HEK293T (cell line): ENCODE measurements at regions of chr17 and their contacts with region 1.

Region 1: GRCh38 chr17:81711814-81712467 is at the start of gene SLC25A10:
- DNase-seq: peak; percentile 90

Region 2: DNA sequence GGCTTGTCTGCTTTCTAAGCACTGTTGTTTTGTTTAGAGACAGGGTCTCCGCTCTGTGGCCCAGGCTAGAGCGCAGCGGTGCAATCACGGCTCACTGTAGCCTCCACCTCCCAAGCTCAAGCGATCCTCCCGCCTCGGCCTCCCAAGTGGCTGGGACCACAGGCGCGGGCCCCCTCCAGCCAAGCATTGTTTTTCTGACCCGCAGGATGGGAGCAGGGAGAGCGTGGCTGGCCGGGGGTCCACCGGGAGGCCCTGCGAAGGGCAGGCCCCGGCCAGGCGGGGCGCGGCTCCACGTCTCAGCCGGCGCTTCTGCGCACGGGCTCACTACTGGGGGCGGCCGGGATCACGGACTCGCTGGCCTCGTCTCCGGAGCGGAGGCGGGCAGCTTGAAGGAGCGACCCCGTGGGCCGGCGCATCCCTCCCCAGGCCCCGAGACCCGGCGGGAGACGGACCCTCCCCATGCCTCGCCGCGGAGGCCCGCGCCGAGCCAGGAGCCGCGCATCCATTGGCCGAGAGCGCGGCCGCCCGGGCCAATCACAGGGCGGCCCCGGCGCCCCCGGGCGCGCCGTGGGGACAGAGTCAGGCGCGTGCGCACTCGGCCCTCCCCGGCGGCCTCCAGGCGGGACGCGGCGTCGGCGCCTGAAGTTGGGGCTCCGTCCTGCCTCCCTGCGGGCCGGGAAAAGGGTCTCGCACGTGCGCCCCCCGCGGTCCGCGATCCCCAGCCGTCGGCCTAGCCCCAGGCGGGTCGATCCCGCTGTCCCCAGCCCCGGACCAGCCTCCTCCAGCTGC is 224.3 kb before region 1 on chr17:
- CTCF ChIA-PET with region 1: no interaction called
- POLR2A ChIA-PET with region 1: no interaction called
- DNase-seq: peak; percentile 95

Region 3: GRCh38 chr17:81723651-81724209 is 11.8 kb after region 1 on chr17:
- CTCF ChIA-PET with region 1: interaction called, 3 read pairs
- POLR2A ChIA-PET with region 1: interaction called, 16 read pairs
- DNase-seq: no peak

Region 4: GRCh38 chr17:81941790-81942553 is 230.0 kb after region 1 on chr17:
- CTCF ChIA-PET with region 1: no interaction called
- POLR2A ChIA-PET with region 1: no interaction called
- DNase-seq: no peak